ENCODE measurements at regions of chr9 and their contacts with region 1.

Region 1: GRCh38 chr9:19464764-19465585 is 56.2 kb downstream of the ACER2 start:
- DNase-seq: peak; percentile 82
- ATAC-seq: peak; percentile 92
- H3K4me3 Mint-ChIP-seq: peak overlapping the region; percentile 74
- H3K27ac Mint-ChIP-seq: no peak overlapping the region
- H3K4me1 Mint-ChIP-seq: peaks cover 3% of the 10 kb centered on the region
- H3K27me3 Mint-ChIP-seq: peaks cover 9% of the 10 kb centered on the region; the same call in 1 of the 2 replicates
- CTCF ChIP-seq: peak; percentile 89

Region 2: DNA sequence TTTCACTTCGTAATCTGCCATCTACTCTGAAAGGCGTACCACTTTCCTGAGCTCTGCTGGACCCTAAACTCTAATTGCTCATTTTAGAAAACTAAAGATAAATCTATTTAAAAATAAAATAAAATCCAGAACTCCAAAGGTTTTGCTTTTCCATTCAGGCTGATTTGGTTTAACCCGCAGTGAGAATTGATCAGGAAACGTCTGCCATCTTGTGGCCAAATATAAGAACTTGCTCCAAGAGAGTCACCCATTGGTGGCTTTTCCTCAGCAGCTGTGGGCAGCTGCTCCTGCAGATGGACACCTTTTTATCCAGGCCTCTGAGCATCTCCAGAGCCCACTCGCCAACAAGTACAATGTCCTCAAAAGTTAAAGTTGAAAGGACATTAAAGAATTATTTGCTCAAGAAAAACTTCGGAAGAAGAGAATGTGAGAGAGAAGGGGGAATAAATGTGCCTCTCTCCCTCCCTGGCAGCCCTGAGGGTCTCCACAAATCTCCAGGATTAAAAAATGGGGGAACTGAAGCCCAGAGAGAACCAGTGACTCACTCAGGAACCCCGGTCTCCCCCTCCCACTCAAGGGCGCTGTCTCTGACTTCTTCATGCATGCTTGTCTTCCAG is 436.0 kb before region 1 on chr9:
- CTCF ChIA-PET with region 1: interaction called, 13 read pairs
- POLR2A ChIA-PET with region 1: no interaction called
- DNase-seq: no peak
- ATAC-seq: peak; percentile 83
- H3K4me3 Mint-ChIP-seq: no peak overlapping the region
- H3K27ac Mint-ChIP-seq: no peak overlapping the region
- H3K4me1 Mint-ChIP-seq: no peaks in the 10 kb centered on the region
- H3K27me3 Mint-ChIP-seq: no peaks in the 10 kb centered on the region; the same call in 1 of the 2 replicates
- CTCF ChIP-seq: peak; percentile 55

Region 3: GRCh38 chr9:19133549-19134345 is 331.2 kb before region 1 on chr9:
- CTCF ChIA-PET with region 1: interaction called, 23 read pairs
- POLR2A ChIA-PET with region 1: no interaction called
- DNase-seq: no peak
- ATAC-seq: no peak
- H3K4me3 Mint-ChIP-seq: no peak overlapping the region
- H3K27ac Mint-ChIP-seq: no peak overlapping the region; the same call in 1 of the 2 replicates
- H3K4me1 Mint-ChIP-seq: peaks cover 48% of the 10 kb centered on the region
- H3K27me3 Mint-ChIP-seq: 0 out of 2 replicates have a peak, but pooled peaks cover 3% of the 10 kb centered on the region
- CTCF ChIP-seq: no peak

Region 4: GRCh38 chr9:19397845-19398244 is 67.1 kb before region 1 on chr9:
- CTCF ChIA-PET with region 1: interaction called, 15 read pairs
- POLR2A ChIA-PET with region 1: no interaction called
- DNase-seq: no peak
- ATAC-seq: no peak
- H3K4me3 Mint-ChIP-seq: no peak overlapping the region
- H3K27ac Mint-ChIP-seq: no peak overlapping the region
- H3K4me1 Mint-ChIP-seq: no peaks in the 10 kb centered on the region
- H3K27me3 Mint-ChIP-seq: no peaks in the 10 kb centered on the region; the same call in 1 of the 2 replicates
- CTCF ChIP-seq: no peak

Region 5: DNA sequence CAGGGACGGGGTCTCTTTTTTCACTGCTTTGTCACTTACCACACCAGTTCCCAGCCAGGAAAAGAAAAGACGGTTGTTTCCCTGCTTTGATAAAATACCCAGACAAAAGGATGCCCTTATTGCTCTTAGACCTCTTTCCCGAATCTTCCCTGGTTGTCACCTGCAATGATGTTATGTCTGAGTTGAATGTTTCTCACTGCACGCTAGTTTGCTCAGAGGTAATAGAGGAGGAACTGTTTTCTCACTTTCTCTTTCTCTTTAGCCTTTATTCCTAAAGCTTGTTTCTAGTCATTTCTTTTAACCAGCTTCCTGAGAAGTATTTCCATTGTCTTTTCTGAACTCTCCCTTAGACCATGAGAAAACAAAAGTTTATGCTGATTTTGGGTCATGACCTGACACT is 23.2 kb before region 1 on chr9:
- CTCF ChIA-PET with region 1: interaction called, 57 read pairs
- POLR2A ChIA-PET with region 1: interaction called, 3 read pairs
- DNase-seq: no peak
- ATAC-seq: no peak
- H3K4me3 Mint-ChIP-seq: no peak overlapping the region
- H3K27ac Mint-ChIP-seq: peak overlapping the region; percentile 68
- H3K4me1 Mint-ChIP-seq: peaks cover 30% of the 10 kb centered on the region
- H3K27me3 Mint-ChIP-seq: no peaks in the 10 kb centered on the region
- CTCF ChIP-seq: no peak

Region 6: GRCh38 chr9:19512103-19512832 is 47.3 kb after region 1 on chr9:
- CTCF ChIA-PET with region 1: interaction called, 16 read pairs
- POLR2A ChIA-PET with region 1: no interaction called
- DNase-seq: no peak
- ATAC-seq: no peak
- H3K4me3 Mint-ChIP-seq: no peak overlapping the region
- H3K27ac Mint-ChIP-seq: no peak overlapping the region
- H3K4me1 Mint-ChIP-seq: peaks cover 10% of the 10 kb centered on the region
- H3K27me3 Mint-ChIP-seq: no peaks in the 10 kb centered on the region
- CTCF ChIP-seq: no peak

Region 7: DNA sequence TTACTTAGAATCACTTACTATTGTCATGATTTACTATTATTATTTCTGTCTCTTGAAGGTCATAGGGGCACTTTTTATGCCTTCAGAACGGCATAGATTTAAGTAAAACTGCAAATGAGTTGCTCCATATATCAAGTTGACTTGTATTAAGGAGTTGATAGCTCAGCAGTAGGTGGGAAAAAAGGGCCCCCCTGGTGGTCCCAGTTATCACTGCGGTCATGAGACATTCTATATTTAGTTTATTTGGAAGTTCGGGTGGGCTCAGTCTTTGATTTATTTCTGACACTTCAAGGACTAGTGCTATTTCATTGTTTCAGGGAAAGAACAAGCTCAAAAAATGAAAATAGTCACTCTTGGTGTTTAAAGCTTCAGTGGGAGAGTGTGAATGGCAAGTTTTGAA is 164.5 kb after region 1 on chr9:
- CTCF ChIA-PET with region 1: interaction called, 10 read pairs
- POLR2A ChIA-PET with region 1: no interaction called
- DNase-seq: peak; percentile 33
- ATAC-seq: peak; percentile 53
- H3K4me3 Mint-ChIP-seq: no peak overlapping the region
- H3K27ac Mint-ChIP-seq: no peak overlapping the region
- H3K4me1 Mint-ChIP-seq: peaks cover 11% of the 10 kb centered on the region
- H3K27me3 Mint-ChIP-seq: no peaks in the 10 kb centered on the region
- CTCF ChIP-seq: 0 out of 2 replicates have a peak, but pooled peaks have one; percentile 15

Region 8: GRCh38 chr9:19703702-19704101 is 238.7 kb after region 1 on chr9:
- CTCF ChIA-PET with region 1: no interaction called
- POLR2A ChIA-PET with region 1: no interaction called
- DNase-seq: no peak
- ATAC-seq: no peak
- H3K4me3 Mint-ChIP-seq: no peak overlapping the region
- H3K27ac Mint-ChIP-seq: peak overlapping the region; percentile 1; the same call in 1 of the 2 replicates
- H3K4me1 Mint-ChIP-seq: peaks cover 60% of the 10 kb centered on the region
- H3K27me3 Mint-ChIP-seq: no peaks in the 10 kb centered on the region
- CTCF ChIP-seq: no peak

Measured in WTC11 (cell line).